GM13977 (cell line): ENCODE measurements at regions of chr1 and their contacts with region 1.

Region 1: DNA sequence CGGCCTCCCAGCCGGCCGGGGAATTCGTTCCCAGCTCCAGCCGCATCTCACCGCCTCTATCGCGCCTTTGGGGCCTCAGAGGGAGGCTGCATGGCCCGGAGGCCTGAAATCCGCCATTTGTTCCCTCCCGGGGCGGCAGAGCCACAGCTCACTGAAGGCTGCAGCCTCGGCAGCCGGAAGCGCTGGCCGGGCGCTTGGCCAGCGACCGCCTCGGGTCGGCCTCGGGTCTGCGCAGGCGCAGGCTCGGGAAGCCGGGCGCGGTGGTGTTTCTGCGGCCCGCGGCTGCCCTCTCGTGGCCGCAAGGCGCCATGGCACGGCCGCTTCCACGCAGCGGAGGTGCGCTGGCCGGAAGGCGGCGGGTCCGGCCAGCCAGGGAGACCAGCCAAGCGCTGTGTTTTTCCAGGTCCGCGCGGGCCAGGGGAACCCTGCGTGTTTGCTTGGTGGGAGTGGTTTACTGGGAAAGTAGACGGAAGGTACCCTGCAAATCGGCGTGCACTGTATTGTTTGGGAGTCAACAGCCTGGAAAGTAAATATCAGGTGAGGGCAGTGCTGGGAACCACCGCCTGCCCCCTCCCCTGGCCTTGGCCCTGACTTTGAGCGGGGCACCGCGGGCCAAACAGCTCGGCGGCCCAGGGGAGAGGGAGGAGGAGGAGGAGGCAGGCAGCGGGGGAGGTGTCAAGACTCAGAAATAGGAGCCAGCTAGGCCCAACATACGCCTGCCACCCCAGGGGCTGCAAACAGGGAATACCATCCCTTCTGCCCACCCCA is 52.7 kb upstream of the CD34 start:
- DNase-seq: peak; percentile 96
- CTCF ChIP-seq: peak; percentile 99

Region 2: GRCh38 chr1:207828485-207829158 is 135.0 kb before region 1 on chr1:
- in situ Hi-C with region 1: loop called (anchors 10 kb)
- DNase-seq: no peak
- CTCF ChIP-seq: peak; percentile 87

Region 3: DNA sequence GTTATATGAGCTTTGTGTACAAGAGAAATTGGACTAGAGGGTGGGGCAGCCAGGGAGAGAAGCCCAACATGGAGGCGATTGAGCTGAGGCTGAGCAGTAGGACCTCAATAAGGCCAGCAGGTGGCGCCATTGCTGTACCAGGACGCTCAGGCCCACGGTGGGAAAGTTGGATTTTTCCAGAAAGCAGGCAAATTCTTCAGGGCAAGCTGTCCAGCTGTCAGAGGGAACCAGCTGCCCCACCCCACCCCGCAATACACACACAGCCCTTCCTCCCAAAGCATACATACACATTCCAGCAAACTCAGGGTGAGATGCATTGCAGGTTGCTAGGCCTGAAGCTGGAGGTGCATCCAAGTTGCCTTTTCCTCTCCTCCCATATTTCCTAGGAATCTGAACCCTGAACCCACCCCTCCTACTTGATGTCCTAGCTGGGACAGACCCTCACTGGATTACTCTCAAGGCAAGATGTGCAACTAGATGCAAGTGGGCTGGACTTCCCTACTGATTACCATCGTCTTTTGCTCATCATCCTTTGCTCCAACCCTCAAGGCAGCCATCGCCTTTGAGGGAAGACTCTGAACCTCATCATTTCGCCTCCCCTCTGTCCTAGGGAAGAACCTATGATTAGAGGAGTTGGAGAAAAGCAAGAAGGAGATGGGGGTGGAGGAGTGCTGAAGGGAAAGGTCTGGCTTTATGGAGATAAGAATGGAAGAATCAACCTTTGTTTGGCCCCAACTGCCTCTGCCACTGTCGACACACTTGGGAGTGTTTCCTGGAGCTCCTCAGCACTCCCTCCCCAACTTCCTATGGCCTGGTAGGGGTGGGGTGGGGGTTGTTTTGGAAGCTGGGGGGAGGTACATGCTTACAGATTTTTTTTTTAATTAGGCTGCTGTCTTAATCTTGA is 78.2 kb before region 1 on chr1:
- in situ Hi-C with region 1: loop called (anchors 10 kb)
- DNase-seq: peak; percentile 78
- CTCF ChIP-seq: peak; percentile 90